HepG2 (cell line): ENCODE measurements at regions of chr11 and their contacts with region 1.

Region 1: DNA sequence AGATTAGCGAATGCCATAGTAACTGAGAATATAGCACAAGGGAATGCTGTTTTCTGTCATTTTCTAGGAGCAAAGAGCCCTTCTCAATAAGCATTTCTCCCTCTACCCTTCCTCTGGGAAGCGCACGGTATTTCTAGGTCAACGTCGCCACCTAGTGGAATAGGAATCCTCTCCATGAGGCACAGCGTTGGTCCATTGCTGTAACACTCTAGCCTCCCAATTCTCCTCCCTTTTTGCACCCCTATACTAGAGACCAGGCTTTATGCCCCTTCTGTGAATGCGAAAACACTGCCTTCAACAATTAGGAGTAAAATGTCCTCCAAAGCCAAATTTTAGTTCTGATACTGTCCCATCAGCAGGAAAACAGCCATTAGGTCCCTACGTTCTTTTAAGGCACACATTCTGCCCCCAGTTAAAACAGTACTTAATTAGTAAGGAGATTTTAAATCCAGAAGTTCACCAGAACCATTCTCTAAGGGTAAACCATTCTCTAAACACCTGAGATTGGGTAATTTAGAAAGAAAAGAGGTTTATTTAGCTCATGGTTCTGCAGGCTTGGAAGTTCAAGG is 12.8 kb upstream of the HYLS1 start:
- DNase-seq: peak; percentile 69
- ATAC-seq: peak; percentile 97
- H3K4me3 ChIP-seq: peak overlapping the region in 2 of 3 experiments; percentile 19 to 36; a peak in 3 of 6 replicates
- H3K27ac ChIP-seq: no peak overlapping the region
- H3K4me1 ChIP-seq: peaks cover 10% of the 10 kb centered on the region
- H3K27me3 ChIP-seq: 0 out of 5 replicates have a peak, but pooled peaks cover 0 to 5% of the 10 kb centered on the region in 2 experiments
- CTCF ChIP-seq: peak; percentile 92
- EP300 ChIP-seq: no peak
- POLR2A ChIP-seq: no peak
- RAD21 ChIP-seq: peak; percentile 68

Region 2: DNA sequence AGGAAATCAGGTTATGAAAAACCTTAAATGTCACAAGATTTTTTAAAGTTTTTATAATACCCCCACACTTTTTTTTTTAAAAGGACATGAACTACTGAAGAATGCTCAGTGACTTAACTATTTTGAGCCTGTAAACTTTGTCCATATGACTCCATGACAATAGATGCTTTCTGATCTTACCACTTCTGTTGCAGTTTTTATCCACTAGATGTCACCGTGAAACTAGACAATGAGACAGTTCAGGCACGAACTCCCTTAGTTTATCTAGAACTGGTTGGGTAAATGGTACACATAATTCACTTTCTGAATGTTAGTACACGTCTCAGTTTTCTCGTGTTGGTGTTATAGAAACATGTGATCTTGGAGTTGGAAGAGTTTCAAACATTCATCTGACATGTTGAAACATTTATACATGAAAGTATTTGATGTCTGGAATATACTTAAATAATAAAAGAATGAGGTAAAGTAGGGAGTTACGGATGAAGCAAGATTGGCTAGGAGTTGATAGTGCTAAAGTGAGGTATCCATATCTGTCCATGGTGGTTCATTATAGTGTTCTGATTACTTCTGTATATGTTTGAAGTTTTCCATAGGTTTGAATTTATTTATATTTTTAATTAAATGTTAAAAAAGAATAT is 912.5 kb before region 1 on chr11:
- CTCF ChIA-PET with region 1: no interaction called
- POLR2A ChIA-PET with region 1: no interaction called
- in situ Hi-C with region 1: no loop called
- intact Hi-C with region 1: loop called (anchors 5 kb)
- DNase-seq: peak; percentile 78
- ATAC-seq: peak; percentile 93
- H3K4me3 ChIP-seq: no peak overlapping the region
- H3K27ac ChIP-seq: no peak overlapping the region
- H3K4me1 ChIP-seq: no peaks in the 10 kb centered on the region
- H3K27me3 ChIP-seq: no peaks in the 10 kb centered on the region
- CTCF ChIP-seq: peak; percentile 87
- EP300 ChIP-seq: no peak
- POLR2A ChIP-seq: no peak
- RAD21 ChIP-seq: peak; percentile 67

Region 3: GRCh38 chr11:125429166-125429707 is 445.4 kb before region 1 on chr11:
- CTCF ChIA-PET with region 1: no interaction called
- POLR2A ChIA-PET with region 1: no interaction called
- in situ Hi-C with region 1: loop called (anchors 10 kb)
- intact Hi-C with region 1: no loop called
- DNase-seq: peak; percentile 35
- ATAC-seq: peak; percentile 68
- H3K4me3 ChIP-seq: no peak overlapping the region
- H3K27ac ChIP-seq: no peak overlapping the region
- H3K4me1 ChIP-seq: no peaks in the 10 kb centered on the region
- H3K27me3 ChIP-seq: peaks cover 2 to 21% of the 10 kb centered on the region in 2 experiments; a peak in 3 of 5 replicates
- CTCF ChIP-seq: peak; percentile 79
- EP300 ChIP-seq: no peak
- POLR2A ChIP-seq: no peak
- RAD21 ChIP-seq: no peak

Region 4: DNA sequence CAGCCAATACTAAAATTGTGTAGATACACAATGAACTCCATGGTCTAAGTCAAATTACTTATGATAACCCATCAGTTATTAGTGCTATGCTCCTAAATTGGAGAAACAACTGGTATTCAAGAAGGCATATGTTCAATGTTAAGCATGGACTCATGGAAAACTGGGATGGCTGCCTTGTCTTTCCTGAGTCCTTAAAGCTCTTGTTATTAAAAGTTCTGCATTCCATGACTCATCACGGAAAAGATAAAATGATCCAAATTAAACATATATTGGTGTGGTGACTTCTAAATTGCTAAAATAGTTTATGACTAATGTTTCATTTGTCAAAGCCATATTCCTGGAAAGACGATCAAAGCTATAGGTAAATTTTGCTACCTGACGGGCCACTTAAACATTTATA is 314.8 kb before region 1 on chr11:
- CTCF ChIA-PET with region 1: no interaction called
- POLR2A ChIA-PET with region 1: no interaction called
- in situ Hi-C with region 1: loop called (anchors 10 kb)
- intact Hi-C with region 1: no loop called
- DNase-seq: no peak
- ATAC-seq: no peak
- H3K4me3 ChIP-seq: no peak overlapping the region
- H3K27ac ChIP-seq: no peak overlapping the region
- H3K4me1 ChIP-seq: peaks cover 21% of the 10 kb centered on the region
- H3K27me3 ChIP-seq: no peaks in the 10 kb centered on the region; a peak in 1 of 5 replicates
- CTCF ChIP-seq: no peak
- EP300 ChIP-seq: no peak
- POLR2A ChIP-seq: no peak
- RAD21 ChIP-seq: no peak

Region 5: GRCh38 chr11:125625630-125626287 is 248.9 kb before region 1 on chr11:
- CTCF ChIA-PET with region 1: no interaction called
- POLR2A ChIA-PET with region 1: no interaction called
- in situ Hi-C with region 1: loop called (anchors 5 kb)
- intact Hi-C with region 1: loop called (anchors 1 kb)
- DNase-seq: peak; percentile 82
- ATAC-seq: peak; percentile 94
- H3K4me3 ChIP-seq: peak overlapping the region; percentile 79 to 90 (median 79)
- H3K27ac ChIP-seq: peak overlapping the region; percentile 87
- H3K4me1 ChIP-seq: peaks cover 29% of the 10 kb centered on the region
- H3K27me3 ChIP-seq: no peaks in the 10 kb centered on the region; a peak in 1 of 5 replicates
- CTCF ChIP-seq: peak; percentile 42
- EP300 ChIP-seq: peak in 1 of 2 experiments; percentile 45; a peak in 1 of 4 replicates
- POLR2A ChIP-seq: peak; percentile 61; a peak in 3 of 4 replicates
- RAD21 ChIP-seq: peak; percentile 42

Region 6: GRCh38 chr11:125724125-125724524 is 150.5 kb before region 1 on chr11:
- CTCF ChIA-PET with region 1: interaction called, 5 read pairs
- POLR2A ChIA-PET with region 1: no interaction called
- in situ Hi-C with region 1: loop called (anchors 10 kb)
- intact Hi-C with region 1: loop called (anchors 1 kb)
- DNase-seq: peak; percentile 22
- ATAC-seq: peak; percentile 73
- H3K4me3 ChIP-seq: no peak overlapping the region
- H3K27ac ChIP-seq: no peak overlapping the region
- H3K4me1 ChIP-seq: no peaks in the 10 kb centered on the region
- H3K27me3 ChIP-seq: peaks cover 1 to 19% of the 10 kb centered on the region in 2 experiments; a peak in 3 of 5 replicates
- CTCF ChIP-seq: peak; percentile 42
- EP300 ChIP-seq: no peak
- POLR2A ChIP-seq: no peak
- RAD21 ChIP-seq: no peak